Heart right ventricle (tissue), 16 donors: ENCODE measurements at regions of chr20 and their contacts with region 1.

Region 1: GRCh38 chr20:56468316-56469082 is at the start of gene RTF2:
- DNase-seq: peak; percentile 94 to 96
- ATAC-seq: peak; percentile 100
- H3K4me3 ChIP-seq: peak within 1 kb of the TSS; percentile 32 to 96 (median 88)
- H3K27ac ChIP-seq: peak within 1 kb of the TSS; percentile 20 to 95 (median 83)
- H3K4me1 ChIP-seq: peaks cover 0 to 54% (median 23%) of the 10 kb centered on the region in 9 donors
- H3K27me3 ChIP-seq: no peaks in the 10 kb centered on the region
- CTCF ChIP-seq: no peak
- total RNA-seq, gene RTF2: 83.1 to 95.5 (median 88.6) TPM

Region 2: GRCh38 chr20:56392282-56393137 is 76.0 kb before region 1 on chr20 and contains the start of gene CSTF1:
- intact Hi-C with region 1: loop called in 9 of 10 experiments (anchors 2 to 5 kb)
- DNase-seq: peak; percentile 99 to 100
- ATAC-seq: peak; percentile 97 to 100 (median 98)
- H3K4me3 ChIP-seq: peak within 1 kb of the TSS; percentile 57 to 94 (median 80)
- H3K27ac ChIP-seq: peak within 1 kb of the TSS; percentile 1 to 93 (median 84)
- H3K4me1 ChIP-seq: peaks cover 2 to 31% (median 23%) of the 10 kb centered on the region in 9 donors
- H3K27me3 ChIP-seq: no peaks in the 10 kb centered on the region
- CTCF ChIP-seq: no peak
- total RNA-seq, gene CSTF1: 16.3 to 23.7 (median 21.6) TPM

Region 3: DNA sequence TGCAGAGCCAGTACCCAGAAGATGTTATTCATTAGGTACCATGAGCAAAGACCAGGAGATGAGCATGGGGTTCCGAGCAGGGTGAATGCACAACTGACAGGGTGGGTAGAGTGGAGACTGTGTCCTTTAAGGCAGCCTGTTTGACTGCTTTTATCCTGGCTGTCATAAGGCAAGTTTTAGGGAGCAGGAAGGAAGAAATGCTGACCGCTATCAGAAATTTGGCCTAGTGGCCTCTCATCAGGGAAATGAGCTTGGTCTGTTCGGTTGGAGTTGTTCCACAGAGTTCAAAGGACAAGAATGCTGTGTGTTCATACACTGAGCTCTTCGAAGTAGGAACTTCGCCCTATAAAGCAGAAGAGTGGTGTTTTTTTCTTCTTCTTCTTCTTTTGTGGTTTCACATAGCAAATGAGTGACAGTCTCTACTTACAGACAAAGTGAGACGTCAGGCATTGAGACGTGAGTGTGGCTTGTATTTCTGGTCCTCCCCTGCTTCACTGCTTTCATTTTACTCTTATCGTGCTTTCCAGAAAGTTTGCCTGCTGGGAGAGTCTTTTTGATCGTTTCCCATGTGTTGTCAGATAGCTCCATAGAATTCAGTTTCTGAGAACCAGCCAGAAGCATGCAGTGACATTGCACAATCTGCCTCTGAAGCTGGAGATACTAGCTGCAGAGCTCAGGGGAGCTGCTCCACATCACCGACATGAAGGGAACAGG is 56.6 kb before region 1 on chr20 and contains the start of gene CASS4:
- intact Hi-C with region 1: loop called in 3 of 10 experiments (anchors 5 to 10 kb)
- DNase-seq: peak in 1 of 2 donors; percentile 34
- ATAC-seq: peak; percentile 50 to 86 (median 74)
- H3K4me3 ChIP-seq: peak within 1 kb of the TSS in 8 of 10 donors; percentile 2 to 60 (median 28)
- H3K27ac ChIP-seq: peak within 1 kb of the TSS; percentile 26 to 92 (median 70)
- H3K4me1 ChIP-seq: peaks cover 3 to 61% (median 52%) of the 10 kb centered on the region in 9 donors
- H3K27me3 ChIP-seq: no peaks in the 10 kb centered on the region
- CTCF ChIP-seq: no peak
- total RNA-seq, gene CASS4: 0.22 to 2.8 (median 0.77) TPM